OCI-LY7 (cell line): ENCODE measurements at regions of chr6 and their contacts with region 1.

Region 1: DNA sequence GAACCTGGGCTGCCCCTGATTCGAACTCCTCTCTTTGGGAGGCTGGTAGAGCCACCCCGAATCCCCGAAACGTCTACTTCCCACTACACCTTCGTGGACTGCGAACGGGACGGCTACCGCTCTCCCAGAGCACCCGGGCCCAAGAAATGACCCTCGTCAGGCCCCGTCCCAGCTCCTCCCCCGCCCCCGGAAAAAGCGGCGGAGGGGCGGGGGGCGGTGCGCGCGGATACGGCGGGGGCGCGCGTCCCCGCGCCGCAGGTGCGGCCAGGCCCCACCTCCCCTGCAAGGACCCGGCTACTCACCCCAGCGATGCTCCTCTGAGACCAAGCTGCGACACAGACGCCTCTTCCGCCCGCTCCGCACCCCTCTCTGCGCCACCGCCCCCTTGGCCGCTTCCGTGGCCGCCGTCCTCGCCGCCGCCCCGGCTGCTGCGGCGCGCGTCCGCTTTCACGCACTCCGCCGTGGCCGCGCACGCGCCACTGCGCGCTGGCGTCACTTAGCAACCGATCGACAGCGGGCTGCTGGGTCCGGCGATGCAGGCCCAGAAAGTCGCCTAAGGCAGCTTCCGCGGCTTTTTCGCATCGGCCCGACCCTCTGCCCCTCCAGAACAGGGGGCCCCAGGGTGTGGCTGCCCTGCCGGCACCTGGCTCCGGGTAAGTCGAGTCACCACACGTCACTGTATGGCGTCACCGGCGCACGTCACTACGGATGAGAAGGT is at the start of gene BTBD9:
- DNase-seq: peak; percentile 91
- H3K4me3 ChIP-seq: peak within 1 kb of the TSS; percentile 96
- H3K27ac ChIP-seq: peak within 1 kb of the TSS; percentile 53
- H3K4me1 ChIP-seq: peaks cover 18% of the 10 kb centered on the region
- CTCF ChIP-seq: no peak
- total RNA-seq, gene BTBD9: 3.6 and 5.9 TPM in 2 replicates

Region 2: GRCh38 chr6:38702558-38703397 is 63.1 kb after region 1 on chr6 and contains the start of gene GLO1:
- CTCF ChIA-PET with region 1: interaction called, 5 read pairs
- POLR2A ChIA-PET with region 1: no interaction called
- intact Hi-C with region 1: loop called (anchors 5 kb)
- DNase-seq: peak; percentile 98
- H3K4me3 ChIP-seq: peak within 1 kb of the TSS; percentile 86
- H3K27ac ChIP-seq: peak within 1 kb of the TSS; percentile 32
- H3K4me1 ChIP-seq: peaks cover 12% of the 10 kb centered on the region
- CTCF ChIP-seq: no peak
- total RNA-seq, gene GLO1: 93.2 and 97.1 TPM in 2 replicates

Region 3: GRCh38 chr6:39114704-39115599 is 475.3 kb after region 1 on chr6 and contains the start of gene SAYSD1:
- CTCF ChIA-PET with region 1: no interaction called
- POLR2A ChIA-PET with region 1: no interaction called
- intact Hi-C with region 1: loop called (anchors 5 kb)
- DNase-seq: peak; percentile 96
- H3K4me3 ChIP-seq: peak within 1 kb of the TSS; percentile 72
- H3K27ac ChIP-seq: peak within 1 kb of the TSS; percentile 77
- H3K4me1 ChIP-seq: peaks cover 18% of the 10 kb centered on the region
- CTCF ChIP-seq: no peak
- total RNA-seq, gene SAYSD1: 14.1 and 15.6 TPM in 2 replicates